CD8-positive, alpha-beta T cell (primary cell): ENCODE measurements at regions of chr14 and their contacts with region 1.

Region 1: DNA sequence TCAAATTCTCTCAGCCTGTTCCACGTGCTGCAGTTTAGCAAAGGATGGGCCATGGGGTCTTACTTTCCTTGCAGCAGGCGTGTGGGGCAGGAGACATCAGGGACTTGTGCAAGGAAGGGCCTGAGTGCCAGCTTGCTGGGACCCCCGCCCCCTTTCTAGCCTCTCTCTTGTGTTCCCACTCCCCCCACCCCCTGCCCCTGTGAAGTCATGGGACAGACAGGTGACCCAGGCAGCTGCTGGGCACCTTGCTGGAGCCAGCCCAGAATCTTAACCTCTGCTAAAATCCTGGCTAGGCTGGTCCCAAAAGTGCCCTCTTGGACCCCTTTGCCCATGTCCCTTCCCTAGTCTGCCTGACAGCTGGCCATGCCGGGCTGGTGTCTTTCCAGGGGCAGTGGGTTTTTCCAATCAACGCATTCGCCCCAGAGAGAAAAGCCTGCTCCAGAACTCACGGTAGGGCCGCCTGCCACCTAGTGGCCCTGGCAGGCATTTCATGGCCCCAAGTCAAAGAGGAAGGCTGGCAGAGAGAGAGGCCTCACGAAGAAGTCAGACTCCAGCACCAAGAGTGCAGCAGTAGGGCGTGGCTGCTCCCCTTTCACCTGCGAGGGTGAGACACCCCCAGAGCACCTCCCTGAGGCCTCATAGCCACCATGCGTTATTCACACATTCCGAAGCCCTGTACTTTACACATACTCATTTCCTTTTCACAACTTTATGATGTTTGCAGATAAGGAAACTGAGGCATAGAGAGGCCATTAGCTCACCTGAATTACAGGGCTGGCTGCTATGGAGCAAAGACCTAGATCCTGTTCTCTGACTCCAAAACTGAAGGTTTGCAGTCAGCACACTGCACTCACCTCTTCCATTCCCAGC is 67.4 kb downstream of the LGMN start:
- DNase-seq: peak; percentile 58 to 89 (median 77)
- ATAC-seq: peak; percentile 83
- H3K4me3 ChIP-seq: no peak overlapping the region
- H3K4me3 Mint-ChIP-seq: no peak overlapping the region
- H3K27ac ChIP-seq: peak overlapping the region in 1 of 2 experiments; percentile 72
- H3K27ac Mint-ChIP-seq: peak overlapping the region; percentile 88
- H3K4me1 ChIP-seq: peaks cover 25% of the 10 kb centered on the region
- H3K4me1 Mint-ChIP-seq: peaks cover 30% of the 10 kb centered on the region
- H3K27me3 ChIP-seq: no peaks in the 10 kb centered on the region
- H3K27me3 Mint-ChIP-seq: no peaks in the 10 kb centered on the region
- CTCF ChIP-seq: peak; percentile 87

Region 2: GRCh38 chr14:92135267-92135666 is 545.7 kb before region 1 on chr14:
- CTCF ChIA-PET with region 1: interaction called, 3 read pairs
- POLR2A ChIA-PET with region 1: no interaction called
- intact Hi-C with region 1: loop called (anchors 1 to 2 kb)
- DNase-seq: peak in 2 of 9 experiments; percentile 31 to 53
- ATAC-seq: no peak
- H3K4me3 ChIP-seq: no peak overlapping the region
- H3K4me3 Mint-ChIP-seq: no peak overlapping the region
- H3K27ac ChIP-seq: no peak overlapping the region
- H3K27ac Mint-ChIP-seq: no peak overlapping the region
- H3K4me1 ChIP-seq: no peaks in the 10 kb centered on the region
- H3K4me1 Mint-ChIP-seq: peaks cover 2% of the 10 kb centered on the region
- H3K27me3 ChIP-seq: no peaks in the 10 kb centered on the region
- H3K27me3 Mint-ChIP-seq: no peaks in the 10 kb centered on the region
- CTCF ChIP-seq: peak; percentile 37

Region 3: GRCh38 chr14:92551044-92551841 is 129.8 kb before region 1 on chr14:
- CTCF ChIA-PET with region 1: interaction called, 5 read pairs
- POLR2A ChIA-PET with region 1: no interaction called
- intact Hi-C with region 1: loop called in 1 of 2 experiments (anchors 1 kb)
- DNase-seq: peak in 2 of 9 experiments; percentile 67 to 82
- ATAC-seq: peak; percentile 57
- H3K4me3 ChIP-seq: no peak overlapping the region
- H3K4me3 Mint-ChIP-seq: no peak overlapping the region
- H3K27ac ChIP-seq: peak overlapping the region in 1 of 2 experiments; percentile 27
- H3K27ac Mint-ChIP-seq: peak overlapping the region; percentile 50
- H3K4me1 ChIP-seq: peaks cover 59% of the 10 kb centered on the region
- H3K4me1 Mint-ChIP-seq: peaks cover 74% of the 10 kb centered on the region
- H3K27me3 ChIP-seq: no peaks in the 10 kb centered on the region
- H3K27me3 Mint-ChIP-seq: no peaks in the 10 kb centered on the region
- CTCF ChIP-seq: peak; percentile 35

Region 4: GRCh38 chr14:92596331-92596911 is 84.6 kb before region 1 on chr14:
- CTCF ChIA-PET with region 1: interaction called, 14 read pairs
- POLR2A ChIA-PET with region 1: interaction called, 5 read pairs
- intact Hi-C with region 1: no loop called
- DNase-seq: peak in 1 of 9 experiments; percentile 35
- ATAC-seq: no peak
- H3K4me3 ChIP-seq: no peak overlapping the region
- H3K4me3 Mint-ChIP-seq: no peak overlapping the region
- H3K27ac ChIP-seq: no peak overlapping the region
- H3K27ac Mint-ChIP-seq: no peak overlapping the region
- H3K4me1 ChIP-seq: peaks cover 15% of the 10 kb centered on the region
- H3K4me1 Mint-ChIP-seq: peaks cover 39% of the 10 kb centered on the region
- H3K27me3 ChIP-seq: no peaks in the 10 kb centered on the region
- H3K27me3 Mint-ChIP-seq: no peaks in the 10 kb centered on the region
- CTCF ChIP-seq: no peak

Region 5: GRCh38 chr14:92612988-92613658 is 67.9 kb before region 1 on chr14:
- CTCF ChIA-PET with region 1: interaction called, 55 read pairs
- POLR2A ChIA-PET with region 1: no interaction called
- intact Hi-C with region 1: loop called (anchors 1 kb)
- DNase-seq: peak; percentile 35 to 82 (median 72)
- ATAC-seq: peak; percentile 30
- H3K4me3 ChIP-seq: no peak overlapping the region
- H3K4me3 Mint-ChIP-seq: no peak overlapping the region
- H3K27ac ChIP-seq: no peak overlapping the region
- H3K27ac Mint-ChIP-seq: peak overlapping the region; percentile 49
- H3K4me1 ChIP-seq: peaks cover 50% of the 10 kb centered on the region
- H3K4me1 Mint-ChIP-seq: peaks cover 66% of the 10 kb centered on the region
- H3K27me3 ChIP-seq: no peaks in the 10 kb centered on the region
- H3K27me3 Mint-ChIP-seq: no peaks in the 10 kb centered on the region
- CTCF ChIP-seq: peak; percentile 94

Region 6: GRCh38 chr14:92651106-92651757 is 29.8 kb before region 1 on chr14:
- CTCF ChIA-PET with region 1: interaction called, 20 read pairs
- POLR2A ChIA-PET with region 1: interaction called, 5 read pairs
- intact Hi-C with region 1: loop called in 1 of 2 experiments (anchors 2 kb)
- DNase-seq: peak; percentile 56 to 96 (median 84)
- ATAC-seq: peak; percentile 82
- H3K4me3 ChIP-seq: peak overlapping the region; percentile 77 to 91
- H3K4me3 Mint-ChIP-seq: peak overlapping the region; percentile 98
- H3K27ac ChIP-seq: peak overlapping the region; percentile 77 to 95
- H3K27ac Mint-ChIP-seq: peak overlapping the region; percentile 100
- H3K4me1 ChIP-seq: peaks cover 61% of the 10 kb centered on the region
- H3K4me1 Mint-ChIP-seq: peaks cover 76% of the 10 kb centered on the region
- H3K27me3 ChIP-seq: no peaks in the 10 kb centered on the region
- H3K27me3 Mint-ChIP-seq: no peaks in the 10 kb centered on the region
- CTCF ChIP-seq: no peak

Region 7: DNA sequence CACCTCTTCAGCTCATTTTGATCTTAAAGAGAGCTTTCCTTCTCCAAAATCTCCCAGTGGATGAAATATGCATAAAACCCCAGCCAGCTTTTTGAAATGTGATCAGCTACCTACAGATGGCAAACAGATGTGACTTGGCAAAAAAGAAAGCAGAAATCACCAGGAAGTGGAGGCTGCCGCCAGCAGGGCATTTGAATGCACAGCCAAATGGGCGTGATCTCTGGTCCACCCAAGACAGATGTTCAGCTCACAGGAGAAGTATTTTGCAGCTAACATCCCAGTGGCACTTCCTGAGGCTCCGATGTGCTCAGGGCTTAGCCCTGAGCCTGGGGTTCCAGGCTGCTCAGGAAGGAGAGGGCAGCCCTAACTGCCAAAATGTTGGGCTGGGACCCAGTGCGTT is 10.9 kb before region 1 on chr14:
- CTCF ChIA-PET with region 1: interaction called, 15 read pairs
- POLR2A ChIA-PET with region 1: interaction called, 5 read pairs
- intact Hi-C with region 1: no loop called
- DNase-seq: no peak
- ATAC-seq: no peak
- H3K4me3 ChIP-seq: no peak overlapping the region
- H3K4me3 Mint-ChIP-seq: no peak overlapping the region
- H3K27ac ChIP-seq: peak overlapping the region in 1 of 2 experiments; percentile 22
- H3K27ac Mint-ChIP-seq: peak overlapping the region; percentile 86
- H3K4me1 ChIP-seq: peaks cover 78% of the 10 kb centered on the region
- H3K4me1 Mint-ChIP-seq: peaks cover 78% of the 10 kb centered on the region
- H3K27me3 ChIP-seq: no peaks in the 10 kb centered on the region
- H3K27me3 Mint-ChIP-seq: no peaks in the 10 kb centered on the region
- CTCF ChIP-seq: no peak